GM10248 (cell line): ENCODE measurements at regions of chr6 and their contacts with region 1.

Region 1: GRCh38 chr6:136289579-136290409 is at the start of gene BCLAF1:
- DNase-seq: peak; percentile 96
- CTCF ChIP-seq: no peak

Region 2: DNA sequence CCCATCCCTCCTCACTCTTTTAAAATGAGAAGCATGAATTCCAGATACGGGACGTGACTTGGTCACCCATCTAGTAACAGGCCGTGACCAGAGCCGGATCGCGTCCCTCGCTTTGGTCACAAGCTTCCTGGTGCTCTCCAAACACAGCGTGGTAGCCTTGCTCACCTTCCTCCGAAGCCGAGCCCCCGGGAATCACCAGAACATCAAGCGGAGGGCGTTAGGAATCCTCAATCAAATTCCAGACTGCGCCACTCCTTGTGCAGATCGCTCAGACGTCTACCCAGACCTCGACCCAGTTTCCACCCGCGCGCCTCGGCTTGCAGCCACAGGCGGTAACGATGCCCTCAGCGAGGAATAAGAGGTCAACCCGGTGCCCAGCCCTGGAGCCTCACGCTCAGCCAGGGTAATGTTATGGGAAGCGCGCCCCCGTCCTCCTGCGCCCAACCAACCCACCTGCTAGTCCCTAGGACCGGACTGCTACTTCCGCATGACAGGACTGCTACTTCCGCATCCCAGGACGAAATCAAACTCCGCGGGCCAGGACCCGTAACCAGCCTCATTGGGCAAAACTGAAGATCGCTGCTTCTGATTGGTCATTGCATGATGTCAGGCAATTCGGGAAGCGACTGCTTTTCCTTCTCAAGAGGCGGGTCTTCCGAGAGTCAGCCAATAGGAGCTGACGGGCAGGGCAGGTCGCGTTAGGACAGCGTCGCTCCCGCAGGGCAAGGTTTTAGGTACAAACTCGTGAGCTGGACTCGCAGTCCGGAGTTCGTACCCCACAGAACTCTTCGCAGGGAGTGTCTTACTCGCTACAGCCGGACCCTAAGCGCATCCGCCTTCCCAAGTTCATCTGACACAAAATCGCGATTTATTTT is 39.7 kb before region 1 on chr6 and contains the start of gene MTFR2:
- CTCF ChIA-PET with region 1: interaction called, 4 read pairs
- POLR2A ChIA-PET with region 1: interaction called, 21 read pairs
- DNase-seq: peak; percentile 96
- CTCF ChIP-seq: no peak